ENCODE measurements at regions of chr3 and their contacts with region 1.

Region 1: GRCh38 chr3:171967137-171967783 is 72.1 kb upstream of the FNDC3B start:
- DNase-seq: peak; percentile 86
- H3K4me3 ChIP-seq: no peak overlapping the region
- H3K27ac ChIP-seq: peak overlapping the region; percentile 71
- H3K4me1 ChIP-seq: peaks cover 20% of the 10 kb centered on the region
- H3K27me3 ChIP-seq: no peaks in the 10 kb centered on the region
- CTCF ChIP-seq: no peak
- POLR2A ChIP-seq: no peak

Region 2: DNA sequence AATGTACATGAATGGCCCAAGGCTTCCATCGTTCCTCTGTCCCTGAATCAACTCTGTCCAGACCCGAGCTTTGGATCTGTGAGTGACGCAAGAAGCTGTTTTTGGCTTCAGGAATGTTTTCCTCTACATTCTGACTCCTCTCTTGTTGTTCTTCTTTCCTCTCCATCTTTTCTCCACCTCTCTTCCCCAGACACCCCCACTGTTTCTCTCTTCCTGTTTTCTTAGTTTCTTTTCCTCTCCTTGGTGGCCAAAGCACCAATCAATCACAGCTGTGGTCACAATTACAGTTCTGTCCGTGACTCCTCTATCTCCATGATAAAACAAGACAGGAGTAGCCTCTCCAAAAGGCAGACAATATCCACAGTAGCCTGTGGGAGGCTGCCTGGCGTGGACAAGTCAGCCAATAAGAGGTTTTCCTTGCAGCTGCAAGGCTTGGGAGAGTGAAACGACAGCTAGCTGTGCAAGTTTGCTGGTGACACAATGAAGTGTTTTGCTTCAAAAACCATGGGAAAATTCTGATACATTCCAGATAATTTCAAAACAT is 129.0 kb before region 1 on chr3:
- CTCF ChIA-PET with region 1: no interaction called
- POLR2A ChIA-PET with region 1: no interaction called
- dilution Hi-C with region 1: no loop called
- intact Hi-C with region 1: loop called (anchors 1 kb)
- DNase-seq: peak; percentile 94
- H3K4me3 ChIP-seq: no peak overlapping the region
- H3K27ac ChIP-seq: peak overlapping the region; percentile 77
- H3K4me1 ChIP-seq: peaks cover 64% of the 10 kb centered on the region
- H3K27me3 ChIP-seq: no peaks in the 10 kb centered on the region
- CTCF ChIP-seq: peak in 1 of 2 donors; percentile 12
- POLR2A ChIP-seq: no peak

Region 3: GRCh38 chr3:171950373-171950772 is 16.9 kb before region 1 on chr3:
- CTCF ChIA-PET with region 1: interaction called, 3 read pairs
- POLR2A ChIA-PET with region 1: no interaction called
- dilution Hi-C with region 1: no loop called
- intact Hi-C with region 1: loop called (anchors 1 kb)
- DNase-seq: peak; percentile 72
- H3K4me3 ChIP-seq: no peak overlapping the region
- H3K27ac ChIP-seq: no peak overlapping the region
- H3K4me1 ChIP-seq: peaks cover 18% of the 10 kb centered on the region
- H3K27me3 ChIP-seq: no peaks in the 10 kb centered on the region
- CTCF ChIP-seq: no peak
- POLR2A ChIP-seq: no peak

Region 4: GRCh38 chr3:172289582-172289981 is 322.3 kb after region 1 on chr3:
- CTCF ChIA-PET with region 1: no interaction called
- POLR2A ChIA-PET with region 1: no interaction called
- dilution Hi-C with region 1: no loop called
- intact Hi-C with region 1: loop called (anchors 10 kb)
- DNase-seq: peak; percentile 57
- H3K4me3 ChIP-seq: no peak overlapping the region
- H3K27ac ChIP-seq: peak overlapping the region; percentile 10
- H3K4me1 ChIP-seq: peaks cover 20% of the 10 kb centered on the region
- H3K27me3 ChIP-seq: no peaks in the 10 kb centered on the region
- CTCF ChIP-seq: peak; percentile 42 to 61
- POLR2A ChIP-seq: no peak